Caco-2 (cell line): ENCODE measurements at regions of chr6 and their contacts with region 1.

Region 1: GRCh38 chr6:29649701-29650673 is 6.9 kb upstream of the MOG start:
- DNase-seq: peak; percentile 95 to 96
- H3K4me3 ChIP-seq: peak overlapping the region; percentile 41
- H3K4me3 Mint-ChIP-seq: peak overlapping the region; percentile 76
- H3K27ac Mint-ChIP-seq: peak overlapping the region; percentile 63
- H3K4me1 ChIP-seq: 0 out of 2 replicates have a peak, but pooled peaks cover 3% of the 10 kb centered on the region
- H3K4me1 Mint-ChIP-seq: peaks cover 7% of the 10 kb centered on the region
- H3K27me3 ChIP-seq: no peaks in the 10 kb centered on the region
- H3K27me3 Mint-ChIP-seq: no peaks in the 10 kb centered on the region
- CTCF ChIP-seq: peak; percentile 69 to 91

Region 2: DNA sequence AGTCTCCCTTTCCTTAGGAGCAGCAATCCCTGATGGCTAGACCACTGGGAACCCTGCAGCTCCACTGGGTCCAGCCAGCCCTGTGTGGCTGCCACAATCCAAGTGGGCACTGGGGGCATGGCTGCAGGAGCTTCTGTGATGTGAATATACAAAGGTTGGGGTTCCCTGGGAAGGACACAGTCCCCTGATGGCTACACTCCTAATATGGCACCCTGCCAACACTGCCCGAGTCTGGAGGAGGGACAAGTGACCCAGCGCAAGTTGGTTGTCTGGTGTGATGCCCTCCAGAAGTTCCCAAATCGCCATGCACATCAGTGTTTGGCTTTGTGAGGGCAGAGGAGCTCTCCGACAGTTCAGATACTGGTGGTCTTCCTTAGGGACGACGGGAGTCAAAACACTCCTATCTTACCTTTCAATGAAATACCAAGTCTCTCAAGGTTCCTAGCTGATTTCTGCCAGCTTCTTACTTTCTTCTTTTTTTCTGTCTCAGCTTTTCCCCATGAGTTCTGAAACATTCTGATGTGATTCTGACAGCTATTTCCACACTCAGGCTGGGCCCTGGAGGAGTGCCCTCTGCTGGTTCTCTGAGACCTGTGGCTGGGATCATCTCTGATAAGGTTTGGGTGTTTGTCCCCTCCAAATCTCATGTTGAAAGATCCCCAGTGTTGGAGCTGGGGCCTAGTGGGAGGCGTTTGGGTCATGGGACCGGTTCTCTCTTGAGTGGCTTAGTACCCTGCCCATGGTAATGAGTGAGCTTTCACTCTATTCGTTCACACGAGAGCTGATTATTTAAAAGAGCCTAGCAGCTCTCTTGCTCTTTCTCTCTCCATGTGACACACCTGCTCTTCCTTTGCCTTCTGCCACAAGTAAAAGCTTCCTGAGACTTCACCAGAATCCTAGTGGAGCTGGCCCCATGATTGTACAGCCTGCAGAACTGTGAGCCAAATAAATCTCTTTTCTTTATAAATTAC is 46.5 kb after region 1 on chr6:
- CTCF ChIA-PET with region 1: interaction called, 30 read pairs
- POLR2A ChIA-PET with region 1: no interaction called
- intact Hi-C with region 1: loop called (anchors 1 kb)
- DNase-seq: peak in 1 of 2 experiments; percentile 20
- H3K4me3 ChIP-seq: no peak overlapping the region
- H3K4me3 Mint-ChIP-seq: no peak overlapping the region
- H3K27ac Mint-ChIP-seq: no peak overlapping the region
- H3K4me1 ChIP-seq: no peaks in the 10 kb centered on the region
- H3K4me1 Mint-ChIP-seq: no peaks in the 10 kb centered on the region
- H3K27me3 ChIP-seq: no peaks in the 10 kb centered on the region
- H3K27me3 Mint-ChIP-seq: peaks cover 2% of the 10 kb centered on the region
- CTCF ChIP-seq: peak; percentile 31 to 68